ENCODE measurements at regions of chr20 and their contacts with region 1.

Region 1: DNA sequence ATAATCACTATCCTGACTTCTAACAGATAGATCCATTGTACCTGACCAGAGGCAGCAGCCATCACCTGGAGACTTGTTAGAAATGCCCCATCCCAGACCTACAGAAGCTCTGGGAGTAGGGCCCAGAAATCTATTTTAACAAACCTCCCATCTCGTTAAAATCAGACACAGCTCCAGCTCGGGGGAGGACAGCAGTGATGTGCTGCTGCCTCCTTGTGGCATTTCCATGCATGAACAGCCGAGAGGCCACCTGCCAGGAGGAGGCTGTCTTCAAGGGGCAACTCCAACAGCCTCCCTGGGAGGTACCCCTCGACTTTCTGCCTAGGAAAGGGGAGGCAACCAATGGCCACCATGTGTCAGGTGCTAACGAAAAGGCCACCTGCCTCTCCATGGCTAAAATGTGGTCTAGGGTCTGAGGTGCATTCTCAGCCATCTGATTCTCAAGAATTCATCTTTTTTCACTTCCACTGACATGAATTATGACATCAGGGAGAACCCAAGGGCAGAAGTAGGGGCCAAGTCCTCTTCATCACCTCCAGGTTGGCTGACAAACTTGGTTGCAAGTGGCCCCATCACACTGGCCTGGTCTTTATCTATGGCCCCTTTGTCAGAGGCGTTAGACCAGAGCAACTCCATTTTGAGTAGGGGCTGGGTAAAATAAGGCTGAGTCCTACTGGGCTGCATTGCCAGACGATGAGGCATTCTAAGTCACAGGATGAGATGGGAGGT is 12.2 kb upstream of the KCNK15 start:
- DNase-seq: peak; percentile 51
- ATAC-seq: peak; percentile 56
- H3K4me3 ChIP-seq: no peak overlapping the region
- H3K27ac ChIP-seq: no peak overlapping the region
- H3K4me1 ChIP-seq: peaks cover 25 to 57% of the 10 kb centered on the region in 2 experiments
- H3K27me3 ChIP-seq: no peaks in the 10 kb centered on the region
- CTCF ChIP-seq: peak; percentile 89 to 95 (median 92)
- POLR2A ChIP-seq: no peak
- RAD21 ChIP-seq: peak; percentile 99

Region 2: DNA sequence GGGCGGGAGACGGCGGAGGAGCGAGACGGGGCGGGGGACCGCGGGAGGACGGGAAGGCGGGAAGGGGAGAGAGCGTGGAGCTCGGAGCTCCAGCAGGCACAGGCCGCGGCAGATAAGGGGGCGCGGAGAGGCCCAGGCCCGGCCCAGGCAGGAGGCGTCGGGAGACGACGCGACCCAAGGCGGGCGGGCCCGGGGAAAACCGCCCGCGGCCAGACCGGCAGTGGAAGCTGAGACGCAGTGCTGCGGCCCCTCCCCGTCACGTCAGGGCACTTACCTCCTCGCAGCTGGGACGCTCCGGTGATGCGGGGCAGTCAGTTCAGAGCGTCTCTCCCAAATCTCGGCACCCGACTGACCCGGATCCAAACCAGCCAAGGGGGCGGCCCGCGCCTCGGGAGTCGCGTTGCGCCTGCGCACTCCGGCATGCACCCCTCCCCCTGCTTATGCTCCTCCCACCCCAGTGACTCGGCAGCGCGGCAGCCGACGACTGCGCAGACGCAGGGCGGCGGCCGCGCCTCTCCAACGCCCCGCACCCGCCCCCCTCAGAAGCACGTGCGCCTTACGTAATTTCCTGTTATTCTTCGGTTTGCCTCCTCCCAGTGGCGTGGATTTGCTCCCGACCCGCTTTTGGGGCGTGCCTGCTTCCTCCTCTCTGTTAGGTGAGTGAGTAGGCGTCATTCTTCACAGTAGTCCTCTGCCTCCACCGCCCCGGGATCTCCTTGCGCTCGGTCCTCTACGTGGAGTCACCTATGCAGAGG is 522.9 kb before region 1 on chr20 and contains the start of gene OSER1:
- CTCF ChIA-PET with region 1: no interaction called
- POLR2A ChIA-PET with region 1: no interaction called
- RAD21 ChIA-PET with region 1: no interaction called
- intact Hi-C with region 1: loop called (anchors 5 kb)
- DNase-seq: peak; percentile 94
- ATAC-seq: peak; percentile 85
- H3K4me3 ChIP-seq: peak within 1 kb of the TSS; percentile 72 to 97
- H3K27ac ChIP-seq: peak within 1 kb of the TSS; percentile 94
- H3K4me1 ChIP-seq: peaks cover 30 to 41% of the 10 kb centered on the region in 2 experiments
- H3K27me3 ChIP-seq: no peaks in the 10 kb centered on the region
- CTCF ChIP-seq: no peak
- POLR2A ChIP-seq: peak; percentile 93
- RAD21 ChIP-seq: no peak
- total RNA-seq, gene OSER1: 28.4 TPM

Region 3: GRCh38 chr20:44683263-44684046 is 50.0 kb before region 1 on chr20:
- CTCF ChIA-PET with region 1: interaction called, 160 read pairs
- POLR2A ChIA-PET with region 1: interaction called, 10 read pairs
- RAD21 ChIA-PET with region 1: interaction called, 10 to 27 read pairs
- intact Hi-C with region 1: loop called (anchors 1 kb)
- DNase-seq: peak; percentile 59
- ATAC-seq: peak; percentile 91
- H3K4me3 ChIP-seq: no peak overlapping the region
- H3K27ac ChIP-seq: no peak overlapping the region
- H3K4me1 ChIP-seq: peaks cover 3 to 22% of the 10 kb centered on the region in 2 experiments
- H3K27me3 ChIP-seq: no peaks in the 10 kb centered on the region
- CTCF ChIP-seq: peak; percentile 63 to 79 (median 77); a peak in 5 of 6 replicates
- POLR2A ChIP-seq: no peak
- RAD21 ChIP-seq: peak; percentile 79

Region 4: DNA sequence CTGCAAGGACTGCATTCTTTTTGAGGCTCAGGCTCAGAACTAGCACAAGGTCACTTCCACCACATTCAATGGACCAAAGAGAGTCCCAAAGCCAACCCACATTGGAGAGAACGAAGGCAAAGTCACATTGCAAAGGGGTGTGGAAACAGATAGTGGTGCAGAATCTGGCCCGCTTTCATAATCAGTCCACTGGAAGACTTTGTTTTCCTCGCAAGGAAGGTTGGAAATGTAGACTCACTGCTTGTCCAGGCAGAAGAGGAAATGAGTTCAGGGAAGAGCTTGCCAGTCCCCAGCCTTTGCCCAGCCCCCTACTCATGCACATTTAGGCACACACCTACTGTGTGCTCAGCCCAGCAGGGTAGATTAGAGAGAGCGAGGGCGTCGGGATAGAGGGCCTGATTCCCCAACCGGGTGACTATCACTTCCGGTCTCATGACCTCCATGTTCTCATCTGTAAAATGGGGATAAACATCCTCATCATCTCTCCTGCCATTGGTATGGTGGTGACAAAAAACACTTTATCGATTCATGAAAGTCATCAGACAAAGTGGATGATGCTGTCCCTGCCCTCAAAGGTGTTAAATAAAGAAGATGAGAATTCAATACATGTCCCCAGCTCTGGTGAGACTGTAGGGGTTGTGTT is 42.6 kb before region 1 on chr20:
- CTCF ChIA-PET with region 1: interaction called, 160 read pairs
- POLR2A ChIA-PET with region 1: interaction called, 10 read pairs
- RAD21 ChIA-PET with region 1: interaction called, 10 to 27 read pairs
- intact Hi-C with region 1: no loop called
- DNase-seq: no peak
- ATAC-seq: no peak
- H3K4me3 ChIP-seq: no peak overlapping the region
- H3K27ac ChIP-seq: no peak overlapping the region
- H3K4me1 ChIP-seq: peaks cover 18 to 19% of the 10 kb centered on the region in 2 experiments
- H3K27me3 ChIP-seq: 0 out of 2 replicates have a peak, but pooled peaks cover 4% of the 10 kb centered on the region
- CTCF ChIP-seq: no peak
- POLR2A ChIP-seq: no peak
- RAD21 ChIP-seq: no peak